MCF 10A (cell line): ENCODE measurements at regions of chr11 and their contacts with region 1.

Region 1: DNA sequence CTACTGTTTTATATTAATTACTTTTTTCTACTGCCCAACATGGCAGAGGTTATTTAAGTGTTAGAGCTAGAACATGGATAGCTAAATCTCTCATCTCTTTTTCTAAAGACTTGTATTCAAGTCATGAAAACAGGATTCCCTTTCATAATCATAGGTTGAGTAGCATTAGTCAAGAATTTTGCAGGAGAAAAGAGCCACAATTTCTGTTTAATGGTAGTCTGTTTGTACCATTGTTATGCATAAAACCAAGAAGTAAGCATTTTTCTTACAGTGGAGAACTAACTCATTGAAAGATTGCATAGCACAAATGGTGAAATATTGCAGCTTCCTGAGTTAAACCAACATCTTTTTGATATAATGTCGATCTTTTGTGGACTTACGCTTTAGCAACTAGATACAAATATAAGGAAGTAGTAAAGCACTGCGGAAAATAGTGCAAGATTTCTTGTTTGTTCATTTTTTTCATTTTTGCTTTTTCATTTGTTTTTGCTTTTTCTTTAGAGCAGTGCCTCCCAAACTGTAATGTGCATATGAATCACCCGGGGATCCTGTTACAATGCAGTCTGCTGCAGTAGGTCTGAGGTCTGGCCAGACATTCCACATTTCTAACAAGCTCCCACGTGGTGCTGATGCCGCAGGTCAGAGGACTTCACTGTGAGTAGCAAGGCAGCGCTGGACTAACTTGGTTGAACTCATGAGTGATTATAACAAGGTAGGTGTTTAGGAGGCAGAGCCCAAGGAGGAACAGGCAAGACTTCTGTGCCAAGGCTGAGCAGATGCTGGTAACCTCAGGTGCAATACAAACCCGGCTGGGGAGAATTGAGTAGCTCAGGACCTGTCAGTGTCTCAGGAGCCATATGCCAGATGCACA is 4.6 kb downstream of the ETS1 start:
- DNase-seq: peak; percentile 84
- H3K4me3 Mint-ChIP-seq: no peak overlapping the region
- H3K27ac Mint-ChIP-seq: no peak overlapping the region
- H3K4me1 Mint-ChIP-seq: peaks cover 13% of the 10 kb centered on the region
- H3K27me3 Mint-ChIP-seq: peaks cover 11% of the 10 kb centered on the region
- CTCF ChIP-seq: no peak

Region 2: DNA sequence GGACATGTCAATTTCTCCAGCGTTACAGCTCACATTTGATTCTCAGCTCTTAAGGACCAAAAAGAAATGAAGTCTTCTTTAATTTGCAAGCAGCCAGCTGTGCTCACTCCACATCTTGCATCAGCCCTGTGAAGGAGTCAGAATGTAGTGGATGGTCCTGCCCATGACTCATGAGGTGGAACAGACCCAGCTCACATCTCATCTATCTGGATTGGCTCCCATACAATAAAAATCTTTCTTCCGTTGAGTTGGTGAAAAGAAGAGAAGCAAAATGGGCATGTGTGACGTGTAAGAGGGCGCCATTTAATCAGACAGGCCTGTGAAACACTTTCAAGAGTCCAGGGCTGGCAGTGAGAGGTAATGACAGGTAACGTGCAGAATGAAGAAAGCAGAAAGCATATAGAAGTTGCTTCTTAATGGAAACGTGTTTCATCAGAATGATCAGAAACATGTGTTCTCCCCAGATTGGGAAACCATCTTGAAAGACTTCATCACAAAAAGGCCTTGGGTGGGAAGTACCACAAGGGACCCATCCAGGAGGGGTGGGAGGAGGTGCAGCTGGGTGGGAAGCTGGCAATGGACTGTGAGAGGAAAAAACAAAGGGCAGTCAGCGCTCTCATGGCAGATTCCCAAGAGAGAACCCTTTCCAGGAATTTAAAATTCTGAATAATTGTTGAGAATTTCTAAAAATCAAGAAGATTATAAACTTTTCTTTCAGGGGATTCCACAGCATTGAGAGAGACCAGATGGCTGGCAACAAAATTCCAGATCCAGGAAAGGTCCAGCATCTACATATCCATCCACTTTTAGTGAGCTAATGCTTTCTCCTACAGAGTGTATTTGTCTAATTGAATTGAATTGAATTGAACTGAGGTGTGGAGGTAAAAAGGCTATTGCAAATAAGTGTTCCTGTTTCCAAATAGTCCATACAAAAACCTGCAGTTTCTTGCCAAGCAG is 52.3 kb before region 1 on chr11:
- CTCF ChIA-PET with region 1: no interaction called
- POLR2A ChIA-PET with region 1: interaction called, 4 read pairs
- intact Hi-C with region 1: loop called (anchors 5 kb)
- DNase-seq: peak; percentile 85
- H3K4me3 Mint-ChIP-seq: no peak overlapping the region
- H3K27ac Mint-ChIP-seq: peak overlapping the region; percentile 33
- H3K4me1 Mint-ChIP-seq: peaks cover 23% of the 10 kb centered on the region
- H3K27me3 Mint-ChIP-seq: no peaks in the 10 kb centered on the region
- CTCF ChIP-seq: no peak

Region 3: DNA sequence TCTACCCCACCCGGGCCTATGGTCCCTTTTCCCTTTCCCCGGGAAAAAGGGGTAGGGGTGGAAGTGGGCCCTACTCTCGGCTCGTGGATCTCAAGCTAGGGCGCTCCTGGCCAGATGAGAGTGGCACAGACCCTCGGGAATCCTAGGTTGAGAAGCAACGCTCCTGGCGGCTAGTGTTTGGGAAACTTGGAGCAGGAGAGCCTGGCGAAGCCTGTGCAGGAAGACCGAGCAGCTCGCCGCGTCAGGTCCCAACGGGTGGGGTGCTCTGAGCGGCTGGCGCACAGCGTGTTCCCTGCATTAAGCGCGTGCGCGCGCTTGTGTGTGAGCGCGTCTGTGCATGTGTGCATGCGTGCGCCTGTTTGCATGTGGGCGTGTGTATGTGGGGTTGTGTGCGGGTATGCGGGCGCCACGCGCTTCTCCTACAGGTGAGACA is 104.0 kb after region 1 on chr11:
- CTCF ChIA-PET with region 1: no interaction called
- POLR2A ChIA-PET with region 1: no interaction called
- intact Hi-C with region 1: no loop called
- DNase-seq: no peak
- H3K4me3 Mint-ChIP-seq: no peak overlapping the region
- H3K27ac Mint-ChIP-seq: no peak overlapping the region
- H3K4me1 Mint-ChIP-seq: no peaks in the 10 kb centered on the region
- H3K27me3 Mint-ChIP-seq: peaks cover 52% of the 10 kb centered on the region
- CTCF ChIP-seq: no peak